T-cell (primary cell): ENCODE measurements at regions of chr1 and their contacts with region 1.

Region 1: GRCh38 chr1:212946377-212946776 is 4.0 kb upstream of the VASH2 start:
- DNase-seq: no peak
- ATAC-seq: no peak
- H3K4me3 ChIP-seq: no peak overlapping the region
- H3K4me3 Mint-ChIP-seq: no peak overlapping the region
- H3K27ac ChIP-seq: no peak overlapping the region
- H3K27ac Mint-ChIP-seq: no peak overlapping the region
- H3K4me1 ChIP-seq: peaks cover 0 to 14% of the 10 kb centered on the region in 2 experiments
- H3K4me1 Mint-ChIP-seq: peaks cover 4 to 12% (median 8%) of the 10 kb centered on the region in 3 donors
- H3K27me3 ChIP-seq: peaks cover 0 to 22% of the 10 kb centered on the region in 2 experiments
- H3K27me3 Mint-ChIP-seq: peaks cover 12 to 21% of the 10 kb centered on the region in 2 donors

Region 2: GRCh38 chr1:211951856-211952255 is 994.5 kb before region 1 on chr1:
- CTCF ChIA-PET with region 1: no interaction called
- POLR2A ChIA-PET with region 1: no interaction called
- DNase-seq: no peak
- ATAC-seq: no peak
- H3K4me3 ChIP-seq: no peak overlapping the region
- H3K4me3 Mint-ChIP-seq: no peak overlapping the region
- H3K27ac ChIP-seq: no peak overlapping the region
- H3K27ac Mint-ChIP-seq: no peak overlapping the region
- H3K4me1 ChIP-seq: peaks cover 3 to 4% of the 10 kb centered on the region in 2 experiments
- H3K4me1 Mint-ChIP-seq: peaks cover 0 to 5% (median 4%) of the 10 kb centered on the region in 3 donors
- H3K27me3 ChIP-seq: no peaks in the 10 kb centered on the region
- H3K27me3 Mint-ChIP-seq: no peaks in the 10 kb centered on the region

Region 3: GRCh38 chr1:212856755-212857154 is 89.6 kb before region 1 on chr1:
- CTCF ChIA-PET with region 1: no interaction called
- POLR2A ChIA-PET with region 1: interaction called in 1 of 2 experiments, 15 read pairs
- DNase-seq: no peak
- ATAC-seq: no peak
- H3K4me3 ChIP-seq: peak overlapping the region in 1 of 2 donors; percentile 25
- H3K4me3 Mint-ChIP-seq: peak overlapping the region in 2 of 3 donors; percentile 59 to 97
- H3K27ac ChIP-seq: no peak overlapping the region
- H3K27ac Mint-ChIP-seq: no peak overlapping the region
- H3K4me1 ChIP-seq: peaks cover 9 to 27% of the 10 kb centered on the region in 2 experiments
- H3K4me1 Mint-ChIP-seq: peaks cover 8 to 30% (median 26%) of the 10 kb centered on the region in 3 donors
- H3K27me3 ChIP-seq: no peaks in the 10 kb centered on the region
- H3K27me3 Mint-ChIP-seq: no peaks in the 10 kb centered on the region